Keratinocyte (primary cell): ENCODE measurements at regions of chr11 and their contacts with region 1.

Region 1: DNA sequence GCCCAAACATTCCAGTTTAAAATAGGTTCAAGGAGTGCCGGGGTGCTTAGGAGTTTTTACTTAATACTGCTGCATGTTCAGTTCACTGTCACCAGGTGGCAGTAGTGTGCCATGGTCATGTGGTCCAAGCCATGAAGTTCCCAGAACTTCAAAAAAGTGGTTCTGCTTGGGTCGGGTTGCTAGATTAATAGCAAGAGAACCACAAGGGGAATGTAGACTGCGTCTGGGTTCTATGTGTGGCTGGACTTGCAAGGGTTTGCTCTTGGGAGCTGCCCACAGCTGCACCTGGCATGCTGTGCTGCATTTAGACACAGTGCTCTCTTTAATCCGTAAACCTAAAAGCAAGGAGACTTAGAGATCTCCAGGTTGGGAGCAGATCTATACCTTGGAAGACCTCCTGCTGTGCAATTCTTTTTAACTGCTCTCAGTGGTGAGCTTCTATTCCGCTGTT is 6.5 kb upstream of the SPON1 start:
- DNase-seq: peak; percentile 41
- H3K4me3 ChIP-seq: no peak overlapping the region
- H3K27ac ChIP-seq: no peak overlapping the region
- H3K4me1 ChIP-seq: no peaks in the 10 kb centered on the region
- H3K27me3 ChIP-seq: peaks cover 58% of the 10 kb centered on the region
- CTCF ChIP-seq: peak; percentile 78 to 86 (median 85)

Region 2: GRCh38 chr11:13772223-13773046 is 183.6 kb before region 1 on chr11:
- dilution Hi-C with region 1: loop called (anchors 25 kb)
- DNase-seq: peak; percentile 36
- H3K4me3 ChIP-seq: no peak overlapping the region
- H3K27ac ChIP-seq: no peak overlapping the region
- H3K4me1 ChIP-seq: no peaks in the 10 kb centered on the region
- H3K27me3 ChIP-seq: peaks cover 7% of the 10 kb centered on the region
- CTCF ChIP-seq: peak; percentile 37 to 56 (median 39)

Region 3: DNA sequence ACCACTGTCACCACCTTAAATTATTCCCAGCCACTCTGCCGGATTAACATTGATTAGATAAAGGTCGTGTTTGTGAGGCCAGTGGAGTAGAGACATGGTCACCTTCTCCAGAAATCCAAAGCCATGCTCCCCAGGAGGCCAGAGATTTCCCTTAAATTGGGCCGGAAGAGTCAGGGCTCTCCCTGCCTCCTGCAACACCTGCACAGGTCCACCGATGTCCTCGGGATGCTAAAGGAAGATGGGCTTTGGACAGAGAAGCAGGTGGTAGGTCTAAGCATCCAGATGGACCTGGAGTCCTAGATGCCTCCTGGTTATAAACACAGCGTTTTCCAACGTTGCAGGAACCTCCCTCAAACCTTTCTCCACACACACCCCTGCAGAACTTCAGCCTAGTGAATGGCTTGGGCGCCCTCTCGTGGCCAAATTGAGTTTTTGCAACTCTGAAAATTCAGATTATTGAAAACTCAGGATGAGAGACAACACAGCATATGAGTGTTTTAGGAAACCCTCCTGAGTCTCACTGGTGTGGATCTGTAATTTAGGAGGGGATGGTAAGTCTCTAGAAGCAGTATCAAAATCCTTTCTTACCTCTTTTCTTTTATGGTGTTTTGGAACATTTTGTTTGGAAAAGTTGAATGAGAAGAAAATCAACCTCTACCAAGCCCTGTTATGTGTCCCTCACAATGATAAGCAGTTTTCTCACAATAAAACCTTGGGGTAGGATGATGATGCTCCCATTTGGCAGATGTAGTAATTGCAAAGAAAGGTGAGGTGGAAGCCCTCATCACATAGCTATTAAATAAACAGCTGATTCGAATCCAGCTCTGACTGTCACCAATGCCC is 293.3 kb after region 1 on chr11:
- dilution Hi-C with region 1: loop called (anchors 25 kb)
- DNase-seq: peak; percentile 9
- H3K4me3 ChIP-seq: no peak overlapping the region
- H3K27ac ChIP-seq: no peak overlapping the region
- H3K4me1 ChIP-seq: peaks cover 7% of the 10 kb centered on the region
- H3K27me3 ChIP-seq: peaks cover 31% of the 10 kb centered on the region
- CTCF ChIP-seq: peak; percentile 72 to 85 (median 74)